HepG2 (cell line): ENCODE measurements at regions of chr12 and their contacts with region 1.

Region 1: DNA sequence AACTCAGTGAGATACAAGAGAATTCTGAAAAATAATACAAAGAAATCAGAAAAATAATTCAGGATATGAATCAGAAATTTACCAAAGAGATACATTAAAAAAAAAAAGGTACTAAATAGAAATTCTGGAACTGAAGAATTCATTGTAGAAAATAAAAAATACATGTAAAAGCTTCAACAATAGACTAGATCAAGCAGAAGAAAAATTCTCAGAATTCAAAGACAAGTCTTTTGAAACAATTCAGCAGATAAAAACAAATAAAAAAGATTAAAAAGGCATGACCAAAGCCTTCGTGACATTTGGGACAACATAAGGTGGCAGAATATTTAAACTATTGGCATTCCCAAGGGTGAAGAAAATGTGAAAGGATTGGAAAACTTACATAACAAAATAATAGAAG is 133.1 kb upstream of the CNOT2 start:
- DNase-seq: no peak
- ATAC-seq: no peak
- H3K4me3 ChIP-seq: no peak overlapping the region
- H3K27ac ChIP-seq: no peak overlapping the region
- H3K4me1 ChIP-seq: no peaks in the 10 kb centered on the region
- H3K27me3 ChIP-seq: no peaks in the 10 kb centered on the region
- CTCF ChIP-seq: no peak
- EP300 ChIP-seq: no peak
- POLR2A ChIP-seq: no peak
- RAD21 ChIP-seq: no peak

Region 2: DNA sequence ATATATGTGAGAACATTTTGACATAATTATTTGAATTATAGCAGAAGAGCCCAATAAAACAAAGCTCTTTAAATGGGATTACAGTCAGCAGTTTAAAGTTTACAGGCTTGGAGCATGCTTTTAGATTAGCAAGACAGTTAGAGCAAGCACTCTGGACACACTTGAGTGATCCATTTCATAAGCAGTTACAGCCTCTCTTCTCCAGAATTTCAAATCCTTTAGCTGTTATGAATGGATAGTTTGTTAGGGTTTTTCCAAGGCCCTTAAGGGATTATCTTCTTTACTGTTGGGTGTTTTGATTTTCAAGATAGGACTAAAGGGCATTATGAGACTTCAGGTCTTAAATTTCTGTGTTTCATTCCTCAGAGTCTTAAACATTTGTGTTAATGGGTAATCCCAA is 447.3 kb before region 1 on chr12:
- CTCF ChIA-PET with region 1: no interaction called
- POLR2A ChIA-PET with region 1: no interaction called
- in situ Hi-C with region 1: no loop called
- intact Hi-C with region 1: no loop called
- DNase-seq: no peak
- ATAC-seq: no peak
- H3K4me3 ChIP-seq: no peak overlapping the region
- H3K27ac ChIP-seq: no peak overlapping the region
- H3K4me1 ChIP-seq: peaks cover 2% of the 10 kb centered on the region; the same call in 1 of the 2 replicates
- H3K27me3 ChIP-seq: peaks cover 0 to 7% of the 10 kb centered on the region in 2 experiments; a peak in 1 of 5 replicates
- CTCF ChIP-seq: no peak
- EP300 ChIP-seq: no peak
- POLR2A ChIP-seq: no peak
- RAD21 ChIP-seq: no peak

Region 3: GRCh38 chr12:70443062-70443673 is 333.1 kb after region 1 on chr12:
- CTCF ChIA-PET with region 1: no interaction called
- POLR2A ChIA-PET with region 1: no interaction called
- in situ Hi-C with region 1: no loop called
- intact Hi-C with region 1: loop called (anchors 2 kb)
- DNase-seq: no peak
- ATAC-seq: no peak
- H3K4me3 ChIP-seq: no peak overlapping the region
- H3K27ac ChIP-seq: no peak overlapping the region
- H3K4me1 ChIP-seq: no peaks in the 10 kb centered on the region
- H3K27me3 ChIP-seq: no peaks in the 10 kb centered on the region
- CTCF ChIP-seq: no peak
- EP300 ChIP-seq: no peak
- POLR2A ChIP-seq: no peak
- RAD21 ChIP-seq: no peak